Activated CD4-positive, alpha-beta T cell treated with anti-CD3 and anti-CD28 coated beads for 36 hours (primary cell): ENCODE measurements at regions of chr1 and their contacts with region 1.

Region 1: DNA sequence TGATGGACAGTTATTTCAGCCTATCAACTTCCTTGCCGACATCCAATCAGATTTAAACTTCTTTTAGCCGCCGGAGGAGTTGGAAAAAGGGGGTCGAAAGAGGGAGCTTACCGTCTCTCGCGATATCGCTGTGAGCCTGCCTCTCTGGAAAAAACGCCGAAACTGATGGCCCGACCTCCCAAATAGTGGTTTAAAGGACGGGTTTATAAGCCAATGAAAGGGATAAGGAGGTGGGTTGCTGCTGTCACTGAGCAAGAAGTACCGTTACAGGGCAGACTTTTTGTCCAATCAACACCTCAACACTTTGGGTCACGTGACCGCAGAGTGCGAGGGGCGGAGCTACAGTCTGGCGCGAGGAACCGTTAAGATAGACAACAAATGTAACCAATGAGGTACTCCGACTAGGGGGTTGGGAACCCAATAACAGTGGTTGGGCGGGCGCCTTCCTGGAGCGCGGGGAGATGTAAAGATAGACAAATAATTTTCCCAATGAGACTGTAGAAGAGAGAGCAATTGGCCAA is at the start of gene RBM15:
- DNase-seq: peak; percentile 97
- ATAC-seq: peak; percentile 83
- H3K4me3 Mint-ChIP-seq: no peak within 1 kb of the TSS
- H3K27ac Mint-ChIP-seq: no peak within 1 kb of the TSS
- H3K4me1 Mint-ChIP-seq: peaks cover 48% of the 10 kb centered on the region
- H3K27me3 Mint-ChIP-seq: no peaks in the 10 kb centered on the region
- total RNA-seq, gene RBM15: 60.7 to 63.2 TPM

Region 2: GRCh38 chr1:109213785-109214468 is 1125.0 kb before region 1 on chr1 and contains the start of gene SARS1:
- CTCF ChIA-PET with region 1: no interaction called
- POLR2A ChIA-PET with region 1: no interaction called
- intact Hi-C with region 1: loop called in 1 of 2 experiments (anchors 10 kb)
- DNase-seq: peak; percentile 93
- ATAC-seq: peak; percentile 85
- H3K4me3 Mint-ChIP-seq: peak within 1 kb of the TSS; percentile 97
- H3K27ac Mint-ChIP-seq: peak within 1 kb of the TSS; percentile 95
- H3K4me1 Mint-ChIP-seq: peaks cover 32% of the 10 kb centered on the region
- H3K27me3 Mint-ChIP-seq: peaks cover 1% of the 10 kb centered on the region
- total RNA-seq, gene SARS1: 224 to 240 TPM

Region 3: DNA sequence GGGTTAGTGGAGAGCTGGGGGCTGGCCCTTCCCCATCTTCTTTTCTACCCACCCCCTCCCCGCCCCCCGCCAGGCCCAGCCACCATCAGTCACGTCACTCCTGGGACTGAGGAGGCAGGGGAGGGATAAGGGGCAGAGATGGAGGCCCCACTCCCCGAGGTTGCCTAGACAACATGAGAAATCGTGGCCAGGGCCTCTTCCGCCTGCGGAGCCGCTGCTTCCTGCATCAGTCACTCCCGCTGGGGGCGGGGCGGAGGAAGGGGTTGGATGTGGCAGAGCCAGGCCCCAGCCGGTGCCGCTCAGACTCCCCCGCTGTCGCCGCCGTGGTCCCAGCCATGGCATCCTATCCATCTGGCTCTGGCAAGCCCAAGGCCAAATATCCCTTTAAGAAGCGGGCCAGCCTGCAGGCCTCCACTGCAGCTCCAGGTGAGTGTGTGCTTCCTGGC is 718.1 kb before region 1 on chr1:
- CTCF ChIA-PET with region 1: interaction called, 5 read pairs
- POLR2A ChIA-PET with region 1: no interaction called
- intact Hi-C with region 1: loop called in 1 of 2 experiments (anchors 2 kb)
- DNase-seq: peak; percentile 99
- ATAC-seq: peak; percentile 86
- H3K4me3 Mint-ChIP-seq: peak overlapping the region; percentile 97
- H3K27ac Mint-ChIP-seq: peak overlapping the region; percentile 97
- H3K4me1 Mint-ChIP-seq: peaks cover 60% of the 10 kb centered on the region
- H3K27me3 Mint-ChIP-seq: no peaks in the 10 kb centered on the region

Region 4: GRCh38 chr1:110196917-110197765 is 141.8 kb before region 1 on chr1:
- CTCF ChIA-PET with region 1: interaction called, 36 read pairs
- POLR2A ChIA-PET with region 1: interaction called, 3 read pairs
- intact Hi-C with region 1: no loop called
- DNase-seq: peak; percentile 77
- ATAC-seq: peak; percentile 97
- H3K4me3 Mint-ChIP-seq: no peak overlapping the region
- H3K27ac Mint-ChIP-seq: no peak overlapping the region
- H3K4me1 Mint-ChIP-seq: no peaks in the 10 kb centered on the region
- H3K27me3 Mint-ChIP-seq: no peaks in the 10 kb centered on the region

Region 5: GRCh38 chr1:110235834-110236682 is 102.9 kb before region 1 on chr1:
- CTCF ChIA-PET with region 1: no interaction called
- POLR2A ChIA-PET with region 1: interaction called, 6 read pairs
- intact Hi-C with region 1: loop called in 1 of 2 experiments (anchors 1 kb)
- DNase-seq: peak; percentile 85
- ATAC-seq: peak; percentile 90
- H3K4me3 Mint-ChIP-seq: peak overlapping the region; percentile 42
- H3K27ac Mint-ChIP-seq: peak overlapping the region; percentile 95
- H3K4me1 Mint-ChIP-seq: peaks cover 57% of the 10 kb centered on the region
- H3K27me3 Mint-ChIP-seq: no peaks in the 10 kb centered on the region

Region 6: GRCh38 chr1:110630839-110631663 is 292.1 kb after region 1 on chr1:
- CTCF ChIA-PET with region 1: no interaction called
- POLR2A ChIA-PET with region 1: no interaction called
- intact Hi-C with region 1: loop called in 1 of 2 experiments (anchors 5 kb)
- DNase-seq: peak; percentile 93
- ATAC-seq: peak; percentile 76
- H3K4me3 Mint-ChIP-seq: no peak overlapping the region
- H3K27ac Mint-ChIP-seq: no peak overlapping the region
- H3K4me1 Mint-ChIP-seq: peaks cover 55% of the 10 kb centered on the region
- H3K27me3 Mint-ChIP-seq: no peaks in the 10 kb centered on the region

Region 7: GRCh38 chr1:110963691-110964399 is 624.9 kb after region 1 on chr1 and contains the start of gene LRIF1:
- CTCF ChIA-PET with region 1: no interaction called
- POLR2A ChIA-PET with region 1: no interaction called
- intact Hi-C with region 1: loop called (anchors 1 to 2 kb)
- DNase-seq: peak; percentile 100
- ATAC-seq: peak; percentile 99
- H3K4me3 Mint-ChIP-seq: peak within 1 kb of the TSS; percentile 78
- H3K27ac Mint-ChIP-seq: peak within 1 kb of the TSS; percentile 94
- H3K4me1 Mint-ChIP-seq: peaks cover 30% of the 10 kb centered on the region
- H3K27me3 Mint-ChIP-seq: peaks cover 7% of the 10 kb centered on the region
- total RNA-seq, gene LRIF1: 15.1 to 15.4 TPM